K562 (cell line): ENCODE measurements at regions of chr20 and their contacts with region 1.

Region 1: GRCh38 chr20:43558412-43559146 is at the start of gene SGK2:
- DNase-seq: peak; percentile 49 to 77 (median 56)
- ATAC-seq: peak; percentile 81
- H3K4me3 ChIP-seq: no peak within 1 kb of the TSS
- H3K27ac ChIP-seq: peak within 1 kb of the TSS; percentile 20; the same call in 2 of the 3 replicates
- H3K4me1 ChIP-seq: peaks cover 23 to 26% of the 10 kb centered on the region in 2 experiments
- H3K27me3 ChIP-seq: no peaks in the 10 kb centered on the region
- CTCF ChIP-seq: no peak
- EP300 ChIP-seq: no peak; the same call in 1 of the 2 replicates
- POLR2A ChIP-seq: no peak
- RAD21 ChIP-seq: no peak
- polyA plus RNA-seq, gene SGK2: not detected

Region 2: DNA sequence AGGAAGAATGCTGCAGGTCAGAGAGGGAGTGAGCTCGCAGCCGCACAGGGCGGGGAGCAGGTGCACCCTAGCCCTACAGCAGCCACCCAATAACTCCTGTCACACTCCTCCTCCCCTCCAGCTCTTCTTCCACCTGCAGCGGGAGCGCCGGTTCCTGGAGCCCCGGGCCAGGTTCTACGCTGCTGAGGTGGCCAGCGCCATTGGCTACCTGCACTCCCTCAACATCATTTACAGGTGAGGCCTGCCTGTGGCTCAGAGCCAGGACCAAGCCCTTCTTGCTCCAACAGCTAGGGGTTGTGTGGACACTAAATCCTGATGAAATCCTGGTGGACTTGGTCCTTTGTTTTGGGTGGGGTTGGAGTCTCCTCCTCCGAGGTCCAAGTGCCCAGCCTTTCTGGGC is 11.9 kb after region 1 on chr20:
- CTCF ChIA-PET with region 1: no interaction called
- POLR2A ChIA-PET with region 1: interaction called, 24 read pairs
- in situ Hi-C with region 1: no loop called
- intact Hi-C with region 1: no loop called
- DNase-seq: no peak
- ATAC-seq: no peak
- H3K4me3 ChIP-seq: no peak overlapping the region
- H3K27ac ChIP-seq: no peak overlapping the region
- H3K4me1 ChIP-seq: peaks cover 2 to 5% of the 10 kb centered on the region in 2 experiments; a peak in 3 of 5 replicates
- H3K27me3 ChIP-seq: no peaks in the 10 kb centered on the region
- CTCF ChIP-seq: no peak
- EP300 ChIP-seq: no peak
- POLR2A ChIP-seq: no peak
- RAD21 ChIP-seq: no peak